Sciatic nerve (tissue), 2 donors: ENCODE measurements at regions of chr2 and their contacts with region 1.

Region 1: GRCh38 chr2:2245500-2245899 is 85.6 kb downstream of the MYT1L start:
- DNase-seq: no peak
- ATAC-seq: no peak

Region 2: DNA sequence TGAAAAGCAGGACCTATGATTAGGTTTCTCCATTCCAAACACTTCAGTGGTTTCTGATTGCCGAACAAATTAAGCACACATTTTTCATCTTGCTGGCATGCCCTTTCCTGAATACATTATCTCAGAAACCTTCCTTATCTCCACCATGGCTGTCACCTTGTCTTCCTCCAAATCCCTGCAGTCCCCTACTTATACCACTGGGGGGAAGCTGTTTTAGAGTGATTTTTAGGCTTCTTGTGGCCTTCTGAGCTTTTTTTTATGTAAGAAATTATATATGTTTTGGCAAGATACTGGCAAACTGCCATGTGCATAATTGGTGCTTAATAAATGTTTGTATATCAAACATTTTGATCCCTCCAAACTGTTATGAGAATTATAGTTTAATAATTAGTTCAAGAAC is 143.6 kb before region 1 on chr2:
- intact Hi-C with region 1: no loop called
- DNase-seq: no peak
- ATAC-seq: no peak

Region 3: DNA sequence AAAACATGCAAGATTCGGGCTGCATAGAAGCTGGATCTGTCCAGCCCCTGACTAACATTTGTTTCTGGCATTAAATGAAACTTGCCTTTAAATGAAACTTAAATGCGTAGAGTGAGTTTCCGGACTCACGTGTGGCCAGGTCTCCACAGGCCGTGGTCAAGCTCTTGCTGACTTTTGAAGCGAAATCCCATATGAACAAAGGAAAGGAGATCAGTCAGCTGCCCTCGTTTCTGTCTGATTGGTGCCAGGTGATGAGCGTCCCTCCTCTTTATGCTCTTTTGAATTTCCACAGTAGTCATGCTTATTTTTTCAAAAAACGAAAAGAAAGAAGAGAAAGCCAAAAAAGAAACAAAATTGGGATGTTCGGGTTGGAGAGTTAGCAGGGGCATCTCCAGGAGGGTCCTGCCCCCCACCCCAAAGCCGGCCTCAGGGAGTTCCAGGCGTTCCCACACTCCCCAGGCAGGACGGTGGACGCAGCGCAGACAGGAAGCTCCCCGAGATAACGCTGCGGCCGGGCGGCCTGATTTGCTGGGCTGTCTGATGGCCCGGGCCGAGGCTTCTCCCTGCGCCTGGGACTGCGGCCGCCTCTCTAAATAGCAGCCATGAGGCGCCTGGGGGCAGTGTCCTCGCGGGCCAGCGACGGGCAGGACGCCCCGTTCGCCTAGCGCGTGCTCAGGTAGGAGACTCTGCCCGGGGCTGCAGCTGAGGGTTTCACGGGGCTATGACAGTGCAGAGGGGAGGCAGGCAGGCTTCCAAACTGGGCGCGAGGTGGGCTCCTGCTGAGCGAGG is 1349.2 kb after region 1 on chr2 and contains the start of gene COLEC11:
- intact Hi-C with region 1: loop called (anchors 5 kb)
- DNase-seq: no peak
- ATAC-seq: peak; percentile 79
- total RNA-seq, gene COLEC11: 1.1 TPM